Activated T-helper 1 cell treated with anti-CD3 and anti-CD28 coated beads, Interleukin-12 subunit alpha, Interleukin-12 subunit beta, Interleukin-2, Interleukin-4 antibody, amounts not matched to agents 30 ng/mL and 10 ng/mL and 1 ng/mL, durations not matched to agents 14 hours and 24 hours and 36 hours (primary cell): ENCODE measurements at regions of chr11 and their contacts with region 1.

Region 1: DNA sequence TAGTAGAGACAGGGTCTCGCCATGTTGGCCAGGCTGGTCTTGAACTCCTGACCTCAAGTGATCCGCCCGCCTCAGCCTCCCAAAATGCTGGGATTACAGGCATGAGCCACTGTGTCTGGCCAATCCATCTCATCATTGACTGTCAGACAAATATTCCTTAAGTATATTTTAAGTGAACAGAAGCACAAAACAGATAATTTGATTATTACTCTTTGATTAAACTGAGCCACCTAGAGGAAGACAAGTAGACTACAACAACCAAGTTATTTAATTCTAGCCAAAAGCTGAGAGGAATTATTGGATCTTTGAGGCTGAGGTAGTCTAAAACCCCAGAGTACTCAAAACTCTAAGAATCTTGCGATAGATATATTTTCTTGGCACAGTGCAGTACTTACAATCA is 1.2 kb downstream of the ACRV1 start:
- DNase-seq: no peak
- H3K4me3 Mint-ChIP-seq: no peak overlapping the region
- H3K27ac Mint-ChIP-seq: peak overlapping the region; percentile 41
- H3K4me1 Mint-ChIP-seq: no peaks in the 10 kb centered on the region
- H3K27me3 Mint-ChIP-seq: no peaks in the 10 kb centered on the region

Region 2: GRCh38 chr11:125663910-125664309 is 15.5 kb before region 1 on chr11:
- intact Hi-C with region 1: loop called (anchors 2 kb)
- DNase-seq: no peak
- H3K4me3 Mint-ChIP-seq: no peak overlapping the region
- H3K27ac Mint-ChIP-seq: peak overlapping the region; percentile 87
- H3K4me1 Mint-ChIP-seq: peaks cover 30% of the 10 kb centered on the region
- H3K27me3 Mint-ChIP-seq: no peaks in the 10 kb centered on the region